CD8-positive, alpha-beta T cell (primary cell): ENCODE measurements at regions of chr14 and their contacts with region 1.

Region 1: GRCh38 chr14:70907176-70907995 is at the start of gene PCNX1:
- DNase-seq: peak; percentile 84 to 95 (median 89)
- ATAC-seq: peak; percentile 80
- H3K4me3 ChIP-seq: peak within 1 kb of the TSS; percentile 87 to 95
- H3K4me3 Mint-ChIP-seq: peak within 1 kb of the TSS; percentile 96
- H3K27ac ChIP-seq: peak within 1 kb of the TSS; percentile 70 to 92
- H3K27ac Mint-ChIP-seq: peak within 1 kb of the TSS; percentile 94
- H3K4me1 ChIP-seq: peaks cover 41% of the 10 kb centered on the region
- H3K4me1 Mint-ChIP-seq: peaks cover 57% of the 10 kb centered on the region
- H3K27me3 ChIP-seq: no peaks in the 10 kb centered on the region
- H3K27me3 Mint-ChIP-seq: no peaks in the 10 kb centered on the region
- CTCF ChIP-seq: peak; percentile 83
- total RNA-seq, gene PCNX1: 54.0 to 63.5 TPM

Region 2: GRCh38 chr14:70600382-70601157 is 306.8 kb before region 1 on chr14 and contains the start of gene MED6:
- CTCF ChIA-PET with region 1: no interaction called
- POLR2A ChIA-PET with region 1: no interaction called
- intact Hi-C with region 1: loop called in 1 of 2 experiments (anchors 5 kb)
- DNase-seq: peak; percentile 83 to 96 (median 94)
- ATAC-seq: peak; percentile 100
- H3K4me3 ChIP-seq: peak within 1 kb of the TSS; percentile 90 to 99
- H3K4me3 Mint-ChIP-seq: peak within 1 kb of the TSS; percentile 99
- H3K27ac ChIP-seq: peak within 1 kb of the TSS; percentile 92 to 96
- H3K27ac Mint-ChIP-seq: peak within 1 kb of the TSS; percentile 99
- H3K4me1 ChIP-seq: peaks cover 20% of the 10 kb centered on the region
- H3K4me1 Mint-ChIP-seq: peaks cover 30% of the 10 kb centered on the region
- H3K27me3 ChIP-seq: no peaks in the 10 kb centered on the region
- H3K27me3 Mint-ChIP-seq: no peaks in the 10 kb centered on the region
- CTCF ChIP-seq: no peak
- total RNA-seq, gene MED6: 116 to 119 TPM

Region 3: DNA sequence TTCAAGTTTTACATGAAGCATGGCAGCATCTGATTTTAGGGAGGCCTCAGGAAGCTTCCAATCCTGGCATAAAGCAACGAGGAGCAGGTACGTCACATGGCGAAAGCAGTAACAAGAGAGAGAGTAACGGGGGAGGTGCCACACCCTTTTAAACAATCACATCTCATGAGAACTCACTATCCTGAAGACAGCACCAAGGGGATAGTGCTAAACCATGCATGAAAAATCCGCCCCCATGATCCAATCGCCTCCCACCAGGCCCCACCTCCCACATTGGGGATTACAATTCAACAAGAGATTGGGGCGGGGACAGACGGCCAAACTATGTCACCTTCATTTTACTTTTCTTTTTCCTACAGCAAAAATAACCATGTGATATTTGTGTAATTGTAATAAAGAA is 90.9 kb before region 1 on chr14:
- CTCF ChIA-PET with region 1: interaction called, 47 read pairs
- POLR2A ChIA-PET with region 1: interaction called, 8 read pairs
- intact Hi-C with region 1: loop called in 1 of 2 experiments (anchors 2 kb)
- DNase-seq: no peak
- ATAC-seq: no peak
- H3K4me3 ChIP-seq: no peak overlapping the region
- H3K4me3 Mint-ChIP-seq: no peak overlapping the region
- H3K27ac ChIP-seq: no peak overlapping the region
- H3K27ac Mint-ChIP-seq: no peak overlapping the region
- H3K4me1 ChIP-seq: peaks cover 8% of the 10 kb centered on the region
- H3K4me1 Mint-ChIP-seq: peaks cover 11% of the 10 kb centered on the region
- H3K27me3 ChIP-seq: no peaks in the 10 kb centered on the region
- H3K27me3 Mint-ChIP-seq: peaks cover 3% of the 10 kb centered on the region
- CTCF ChIP-seq: no peak

Region 4: DNA sequence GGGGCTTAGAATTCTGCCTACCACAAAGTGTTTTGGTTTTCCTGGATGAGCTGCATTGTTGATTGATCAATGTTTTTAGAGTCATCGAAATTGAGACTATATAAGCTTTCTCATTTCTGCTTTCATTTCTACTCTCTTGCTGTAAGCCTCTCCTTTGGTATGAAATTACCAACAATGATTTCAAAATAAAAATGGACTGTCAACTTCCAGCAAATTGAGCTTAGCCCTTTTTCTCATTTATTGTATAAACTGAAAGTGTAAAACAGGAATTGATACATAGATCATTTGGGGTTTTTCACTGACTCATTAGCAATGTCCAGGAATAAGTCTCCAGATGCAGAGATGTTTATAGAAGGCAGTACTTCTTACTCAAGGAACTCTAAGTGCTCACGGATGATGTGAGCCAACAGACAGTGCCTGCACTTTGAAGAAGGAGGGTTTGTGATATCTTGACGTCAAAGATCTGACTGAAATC is 20.1 kb before region 1 on chr14:
- CTCF ChIA-PET with region 1: interaction called, 11 read pairs
- POLR2A ChIA-PET with region 1: interaction called, 15 read pairs
- intact Hi-C with region 1: no loop called
- DNase-seq: peak in 1 of 9 experiments; percentile 37
- ATAC-seq: peak; percentile 19
- H3K4me3 ChIP-seq: peak overlapping the region in 1 of 2 experiments; percentile 21
- H3K4me3 Mint-ChIP-seq: peak overlapping the region; percentile 58
- H3K27ac ChIP-seq: peak overlapping the region in 1 of 2 experiments; percentile 58
- H3K27ac Mint-ChIP-seq: peak overlapping the region; percentile 69
- H3K4me1 ChIP-seq: peaks cover 67% of the 10 kb centered on the region
- H3K4me1 Mint-ChIP-seq: peaks cover 69% of the 10 kb centered on the region
- H3K27me3 ChIP-seq: no peaks in the 10 kb centered on the region
- H3K27me3 Mint-ChIP-seq: no peaks in the 10 kb centered on the region
- CTCF ChIP-seq: no peak

Region 5: GRCh38 chr14:70934502-70935134 is 27.2 kb after region 1 on chr14:
- CTCF ChIA-PET with region 1: interaction called, 14 read pairs
- POLR2A ChIA-PET with region 1: interaction called, 21 read pairs
- intact Hi-C with region 1: loop called in 1 of 2 experiments (anchors 2 kb)
- DNase-seq: peak in 1 of 9 experiments; percentile 37
- ATAC-seq: peak; percentile 67
- H3K4me3 ChIP-seq: peak overlapping the region in 1 of 2 experiments; percentile 8
- H3K4me3 Mint-ChIP-seq: peak overlapping the region; percentile 66
- H3K27ac ChIP-seq: peak overlapping the region; percentile 18 to 61
- H3K27ac Mint-ChIP-seq: peak overlapping the region; percentile 84
- H3K4me1 ChIP-seq: peaks cover 25% of the 10 kb centered on the region
- H3K4me1 Mint-ChIP-seq: peaks cover 84% of the 10 kb centered on the region
- H3K27me3 ChIP-seq: no peaks in the 10 kb centered on the region
- H3K27me3 Mint-ChIP-seq: no peaks in the 10 kb centered on the region
- CTCF ChIP-seq: no peak

Region 6: DNA sequence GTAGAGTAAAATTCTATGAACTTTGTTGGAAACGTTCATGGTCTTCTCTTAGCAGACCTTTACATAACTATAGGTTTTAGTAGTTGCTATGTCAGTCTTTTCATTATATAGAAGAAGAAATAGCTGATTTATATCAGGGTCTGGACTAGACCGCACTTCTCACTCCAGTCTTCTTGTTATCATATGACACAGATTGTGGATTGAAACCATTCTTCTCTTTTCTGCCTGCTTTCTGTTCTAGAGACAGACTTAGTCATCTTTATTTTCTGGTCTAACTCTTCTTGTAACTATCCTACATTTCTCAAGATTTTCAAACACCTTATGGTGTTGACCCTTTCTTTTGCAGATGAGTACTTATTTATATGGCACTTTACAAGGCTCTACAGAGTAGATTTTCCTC is 55.5 kb after region 1 on chr14:
- CTCF ChIA-PET with region 1: interaction called, 37 read pairs
- POLR2A ChIA-PET with region 1: interaction called, 3 read pairs
- intact Hi-C with region 1: no loop called
- DNase-seq: no peak
- ATAC-seq: no peak
- H3K4me3 ChIP-seq: no peak overlapping the region
- H3K4me3 Mint-ChIP-seq: no peak overlapping the region
- H3K27ac ChIP-seq: no peak overlapping the region
- H3K27ac Mint-ChIP-seq: peak overlapping the region; percentile 45
- H3K4me1 ChIP-seq: no peaks in the 10 kb centered on the region
- H3K4me1 Mint-ChIP-seq: peaks cover 54% of the 10 kb centered on the region
- H3K27me3 ChIP-seq: no peaks in the 10 kb centered on the region
- H3K27me3 Mint-ChIP-seq: no peaks in the 10 kb centered on the region
- CTCF ChIP-seq: no peak

Region 7: DNA sequence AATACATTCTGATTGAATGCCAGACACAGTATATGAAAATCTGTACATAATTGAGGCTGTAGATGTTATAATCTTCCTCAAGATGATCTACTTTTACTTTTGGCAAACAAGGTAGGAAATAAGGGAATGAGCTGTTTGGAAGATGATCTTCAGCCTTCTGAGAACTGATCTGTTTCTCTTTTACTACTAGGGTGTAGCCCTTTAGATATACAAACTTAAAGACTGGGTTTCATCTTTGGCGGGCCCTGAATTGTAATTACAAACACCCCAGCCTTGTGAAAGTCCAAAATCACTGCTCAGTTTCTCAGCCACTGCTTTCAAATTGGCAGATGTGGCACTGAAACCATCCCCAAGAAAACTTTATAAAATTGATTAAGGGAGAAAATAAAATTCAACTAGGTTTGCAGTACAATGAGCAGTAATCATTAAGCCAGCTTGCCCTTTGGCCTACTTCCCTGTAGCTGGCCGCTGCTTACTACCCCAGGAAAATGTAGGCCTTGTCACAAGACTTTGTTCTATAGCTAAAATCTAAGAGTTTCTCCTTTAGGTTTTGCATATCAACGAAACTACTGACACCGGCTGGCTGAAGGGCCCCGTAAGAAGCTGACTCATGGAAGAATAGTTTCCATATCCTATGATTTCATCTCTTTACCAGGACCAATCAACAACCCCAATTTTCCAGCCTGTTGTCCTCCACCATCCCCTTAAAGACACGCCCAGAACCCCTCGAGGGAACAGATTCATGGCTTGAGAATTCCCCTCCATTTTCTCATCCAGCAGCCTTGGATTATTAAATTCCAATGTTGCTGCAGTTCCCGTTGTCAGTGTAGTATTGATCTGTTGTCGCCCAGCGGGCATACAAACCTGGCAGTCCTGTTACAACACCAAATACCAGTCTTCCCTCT is 210.7 kb after region 1 on chr14:
- CTCF ChIA-PET with region 1: no interaction called
- POLR2A ChIA-PET with region 1: no interaction called
- intact Hi-C with region 1: no loop called
- DNase-seq: no peak
- ATAC-seq: no peak
- H3K4me3 ChIP-seq: no peak overlapping the region
- H3K4me3 Mint-ChIP-seq: no peak overlapping the region
- H3K27ac ChIP-seq: no peak overlapping the region
- H3K27ac Mint-ChIP-seq: peak overlapping the region; percentile 75
- H3K4me1 ChIP-seq: no peaks in the 10 kb centered on the region
- H3K4me1 Mint-ChIP-seq: peaks cover 6% of the 10 kb centered on the region
- H3K27me3 ChIP-seq: no peaks in the 10 kb centered on the region
- H3K27me3 Mint-ChIP-seq: no peaks in the 10 kb centered on the region
- CTCF ChIP-seq: no peak